Activated naive CD4-positive, alpha-beta T cell treated with anti-CD3 and anti-CD28 coated beads for 36 hours (primary cell): ENCODE measurements at regions of chr22 and their contacts with region 1.

Region 1: DNA sequence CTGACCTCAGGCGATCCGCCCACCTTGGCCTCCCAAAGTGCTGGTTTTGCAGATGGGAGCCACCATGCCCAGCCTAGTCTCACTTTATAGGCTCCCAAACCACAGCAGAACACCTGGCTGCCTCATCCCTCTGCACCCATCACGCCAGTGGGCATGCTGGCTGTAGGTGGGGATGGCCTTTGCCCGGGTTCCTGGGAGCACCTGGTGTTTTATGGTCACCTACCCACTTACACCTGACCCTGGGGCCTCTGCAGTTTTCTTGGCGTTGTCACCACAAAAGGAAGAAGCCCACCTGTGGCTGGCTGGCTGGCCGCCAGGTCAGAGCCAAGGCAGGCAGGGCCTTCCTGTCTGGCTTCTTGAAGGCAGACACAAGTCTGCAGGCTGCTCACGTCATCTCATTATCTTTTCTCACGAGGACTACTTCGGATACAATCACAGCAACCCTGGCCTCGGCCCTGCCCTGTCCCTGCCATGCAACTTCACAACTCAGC is 8.2 kb downstream of the RRP7A start:
- DNase-seq: no peak
- H3K4me3 Mint-ChIP-seq: no peak overlapping the region
- H3K27ac Mint-ChIP-seq: peak overlapping the region; percentile 24
- H3K4me1 Mint-ChIP-seq: no peaks in the 10 kb centered on the region
- H3K27me3 Mint-ChIP-seq: no peaks in the 10 kb centered on the region

Region 2: GRCh38 chr22:42418811-42419242 is 92.6 kb before region 1 on chr22:
- CTCF ChIA-PET with region 1: no interaction called
- intact Hi-C with region 1: no loop called
- DNase-seq: no peak
- H3K4me3 Mint-ChIP-seq: no peak overlapping the region
- H3K27ac Mint-ChIP-seq: no peak overlapping the region
- H3K4me1 Mint-ChIP-seq: no peaks in the 10 kb centered on the region
- H3K27me3 Mint-ChIP-seq: no peaks in the 10 kb centered on the region

Region 3: GRCh38 chr22:42565956-42566355 is 54.5 kb after region 1 on chr22:
- CTCF ChIA-PET with region 1: no interaction called
- intact Hi-C with region 1: loop called (anchors 5 kb)
- DNase-seq: no peak
- H3K4me3 Mint-ChIP-seq: no peak overlapping the region
- H3K27ac Mint-ChIP-seq: no peak overlapping the region
- H3K4me1 Mint-ChIP-seq: no peaks in the 10 kb centered on the region
- H3K27me3 Mint-ChIP-seq: no peaks in the 10 kb centered on the region

Region 4: DNA sequence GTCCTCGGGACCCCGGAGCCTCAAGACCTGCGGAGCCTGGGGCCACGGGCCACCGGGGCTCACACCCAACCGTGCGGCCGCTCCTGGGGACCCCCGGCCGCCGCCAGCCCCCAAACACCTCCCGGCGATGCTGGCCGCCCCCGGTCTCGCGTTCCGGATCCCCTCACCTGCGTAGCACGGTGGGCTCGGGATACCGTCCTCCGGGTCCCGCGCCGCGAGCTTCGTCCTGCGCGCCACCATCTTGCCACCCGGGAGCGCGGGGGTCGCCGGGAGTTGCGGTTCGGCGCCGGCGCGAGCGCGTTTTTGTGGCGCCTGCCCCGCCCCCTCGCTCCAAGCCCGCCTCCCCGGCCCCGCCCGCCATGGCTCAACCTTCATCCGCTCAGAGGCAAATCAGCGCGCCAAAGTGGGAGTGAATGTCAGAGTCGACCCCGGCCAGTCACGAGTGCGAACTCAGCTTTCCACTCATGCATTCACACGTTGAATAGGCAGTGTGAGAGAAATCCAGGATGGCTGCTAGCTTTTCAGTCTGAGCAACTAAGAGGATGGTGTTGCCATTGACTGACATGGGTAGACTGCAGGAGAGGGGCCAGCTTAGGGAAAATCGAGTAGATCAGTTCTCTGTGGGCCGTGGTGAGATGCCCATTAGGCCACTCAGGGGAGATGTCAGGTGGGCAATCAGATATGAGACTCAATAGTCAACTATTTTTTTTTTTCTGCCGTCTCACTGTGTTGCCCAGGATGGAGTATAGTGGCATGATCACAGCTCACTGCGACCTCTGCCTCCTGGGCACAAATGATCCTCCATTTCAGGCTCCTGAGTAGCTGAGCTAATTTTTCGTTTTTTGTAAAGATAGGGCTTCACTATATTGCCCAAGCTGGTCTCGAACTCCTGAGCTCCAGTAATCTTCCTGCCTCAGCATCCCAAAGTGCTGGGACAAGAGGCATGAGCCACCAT is 70.6 kb after region 1 on chr22:
- CTCF ChIA-PET with region 1: no interaction called
- intact Hi-C with region 1: no loop called
- DNase-seq: peak; percentile 92
- H3K4me3 Mint-ChIP-seq: peak overlapping the region; percentile 96
- H3K27ac Mint-ChIP-seq: peak overlapping the region; percentile 73
- H3K4me1 Mint-ChIP-seq: peaks cover 10% of the 10 kb centered on the region
- H3K27me3 Mint-ChIP-seq: no peaks in the 10 kb centered on the region